Prostate gland (tissue), 2 donors: ENCODE measurements at regions of chr1 and their contacts with region 1.

Region 1: GRCh38 chr1:19918057-19918456 is 5.4 kb downstream of the PLA2G2E start:
- DNase-seq: peak; percentile 80
- H3K4me3 ChIP-seq: no peak overlapping the region
- H3K27ac ChIP-seq: no peak overlapping the region
- H3K4me1 ChIP-seq: no peaks in the 10 kb centered on the region
- H3K27me3 ChIP-seq: no peaks in the 10 kb centered on the region
- CTCF ChIP-seq: peak; percentile 76 to 92 (median 90)
- POLR2A ChIP-seq: no peak

Region 2: DNA sequence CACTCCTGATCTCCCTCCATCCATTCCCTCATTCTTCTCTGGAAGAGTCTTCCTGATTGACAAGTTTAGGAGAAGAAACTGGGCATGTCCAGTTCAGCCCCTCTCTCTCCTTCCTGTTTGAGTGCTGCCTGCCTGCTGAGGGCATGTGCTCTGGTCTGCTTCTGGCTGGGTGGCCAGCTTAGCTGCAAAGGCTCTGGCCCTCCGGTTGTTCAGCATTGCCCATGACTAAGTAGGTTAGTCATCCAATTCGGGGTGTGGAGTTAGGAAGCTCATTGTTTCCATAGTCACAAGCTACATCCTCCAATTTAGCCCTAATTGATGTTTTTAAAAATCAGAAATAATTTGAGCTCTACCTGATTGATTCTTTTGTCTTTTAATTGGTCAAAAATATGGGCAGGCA is 31.0 kb after region 1 on chr1:
- intact Hi-C with region 1: no loop called
- DNase-seq: no peak
- H3K4me3 ChIP-seq: no peak overlapping the region
- H3K27ac ChIP-seq: no peak overlapping the region
- H3K4me1 ChIP-seq: no peaks in the 10 kb centered on the region
- H3K27me3 ChIP-seq: no peaks in the 10 kb centered on the region
- CTCF ChIP-seq: no peak
- POLR2A ChIP-seq: no peak

Region 3: GRCh38 chr1:20093940-20094391 is 175.9 kb after region 1 on chr1:
- intact Hi-C with region 1: loop called (anchors 10 kb)
- DNase-seq: no peak
- H3K4me3 ChIP-seq: no peak overlapping the region
- H3K27ac ChIP-seq: peak overlapping the region in 1 of 2 donors; percentile 40
- H3K4me1 ChIP-seq: no peaks in the 10 kb centered on the region
- H3K27me3 ChIP-seq: no peaks in the 10 kb centered on the region
- CTCF ChIP-seq: no peak
- POLR2A ChIP-seq: no peak

Region 4: GRCh38 chr1:20151906-20152598 is 234.0 kb after region 1 on chr1:
- intact Hi-C with region 1: loop called (anchors 5 kb)
- DNase-seq: peak; percentile 59
- H3K4me3 ChIP-seq: peak overlapping the region; percentile 11 to 29
- H3K27ac ChIP-seq: peak overlapping the region in 1 of 2 donors; percentile 30
- H3K4me1 ChIP-seq: no peaks in the 10 kb centered on the region
- H3K27me3 ChIP-seq: no peaks in the 10 kb centered on the region
- CTCF ChIP-seq: peak; percentile 86 to 96 (median 92)
- POLR2A ChIP-seq: no peak

Region 5: GRCh38 chr1:20194757-20195461 is 276.9 kb after region 1 on chr1:
- intact Hi-C with region 1: loop called (anchors 10 kb)
- DNase-seq: peak; percentile 58
- H3K4me3 ChIP-seq: no peak overlapping the region
- H3K27ac ChIP-seq: peak overlapping the region in 1 of 2 donors; percentile 2
- H3K4me1 ChIP-seq: no peaks in the 10 kb centered on the region
- H3K27me3 ChIP-seq: no peaks in the 10 kb centered on the region
- CTCF ChIP-seq: peak; percentile 34 to 80 (median 79)
- POLR2A ChIP-seq: no peak

Region 6: GRCh38 chr1:20426923-20427322 is 508.9 kb after region 1 on chr1:
- intact Hi-C with region 1: no loop called
- DNase-seq: no peak
- H3K4me3 ChIP-seq: no peak overlapping the region
- H3K27ac ChIP-seq: no peak overlapping the region
- H3K4me1 ChIP-seq: no peaks in the 10 kb centered on the region
- H3K27me3 ChIP-seq: no peaks in the 10 kb centered on the region
- CTCF ChIP-seq: no peak
- POLR2A ChIP-seq: no peak

Region 7: DNA sequence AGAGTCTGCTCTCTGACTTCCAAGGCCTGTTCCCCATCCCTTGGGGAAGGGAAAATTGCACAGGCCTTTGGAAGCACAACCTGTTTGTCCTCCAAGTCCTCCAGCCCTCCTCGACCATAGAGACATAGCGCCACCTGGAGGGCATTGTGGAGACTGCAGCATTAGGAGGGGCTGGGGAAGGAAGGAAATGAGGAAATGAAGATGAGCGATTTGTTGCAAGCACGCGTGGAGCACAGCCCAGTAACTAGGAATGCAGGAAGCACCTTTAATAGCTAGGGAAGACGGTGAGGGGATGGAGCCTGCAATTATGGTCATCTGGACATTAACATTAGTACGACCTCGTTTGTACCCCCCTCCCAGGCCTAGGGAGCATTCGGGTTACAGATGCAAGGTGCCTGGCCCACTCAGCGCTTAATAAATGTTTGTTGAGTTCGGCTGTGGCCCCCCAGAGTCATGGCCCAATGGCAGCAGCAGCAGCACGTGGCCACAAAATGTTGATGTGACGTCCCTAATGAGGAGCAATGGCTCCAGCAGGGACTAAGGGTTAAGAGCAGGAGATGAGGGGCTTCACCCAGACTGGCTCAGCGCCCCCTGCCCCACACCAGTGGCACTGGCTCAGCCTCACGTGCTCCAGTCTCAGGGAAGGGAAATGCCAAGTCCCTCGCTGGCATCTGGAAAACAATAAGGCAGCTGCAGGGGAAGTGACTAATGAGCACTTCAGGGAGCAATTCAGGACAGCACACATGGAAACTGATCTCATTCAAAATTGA is 576.0 kb after region 1 on chr1:
- intact Hi-C with region 1: loop called (anchors 5 kb)
- DNase-seq: peak; percentile 74
- H3K4me3 ChIP-seq: no peak overlapping the region
- H3K27ac ChIP-seq: no peak overlapping the region
- H3K4me1 ChIP-seq: no peaks in the 10 kb centered on the region
- H3K27me3 ChIP-seq: no peaks in the 10 kb centered on the region
- CTCF ChIP-seq: peak; percentile 96 to 99 (median 98)
- POLR2A ChIP-seq: no peak

Region 8: DNA sequence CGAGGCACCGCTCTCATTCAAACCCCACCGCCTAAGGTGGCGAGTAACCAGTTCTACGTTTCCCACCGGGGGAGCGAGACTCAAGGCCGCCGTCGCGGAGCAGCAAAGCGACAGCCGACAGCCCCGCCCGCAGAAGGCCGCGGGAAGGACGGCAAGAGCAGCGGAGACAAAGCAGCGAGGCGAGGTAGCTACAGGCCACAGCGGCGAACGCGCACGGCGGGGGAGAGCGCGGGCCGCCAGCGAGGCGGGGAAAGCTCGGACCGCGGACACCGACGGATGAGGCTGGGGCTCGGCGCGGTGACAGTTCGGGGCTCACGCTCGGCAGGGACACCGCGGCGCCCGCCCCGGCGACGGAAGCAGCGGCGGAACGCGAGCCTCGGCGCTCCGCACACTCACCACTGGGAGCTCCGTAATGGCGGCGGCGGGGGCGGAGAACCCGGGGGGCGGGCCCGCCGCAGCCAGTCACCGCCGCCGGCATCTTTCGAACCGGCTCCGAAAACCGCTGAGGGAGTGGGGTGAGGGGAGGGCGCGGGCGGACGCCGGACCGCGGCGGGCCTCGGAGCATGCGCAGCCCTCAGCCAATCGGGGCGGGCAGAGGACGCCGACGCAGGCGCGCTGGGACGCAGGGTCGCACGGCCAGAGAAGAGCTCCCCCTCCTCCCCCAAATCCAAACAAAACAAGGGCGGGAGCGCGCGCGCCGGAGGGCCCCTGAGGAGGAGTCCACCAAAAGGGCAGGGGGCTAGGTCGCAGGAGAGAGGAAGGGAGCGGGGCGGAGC is 868.4 kb after region 1 on chr1:
- intact Hi-C with region 1: no loop called
- DNase-seq: peak; percentile 93
- H3K4me3 ChIP-seq: peak overlapping the region; percentile 97
- H3K27ac ChIP-seq: peak overlapping the region; percentile 99
- H3K4me1 ChIP-seq: peaks cover 12% of the 10 kb centered on the region
- H3K27me3 ChIP-seq: no peaks in the 10 kb centered on the region
- CTCF ChIP-seq: peak in 3 of 4 experiments; percentile 3 to 19 (median 5)
- POLR2A ChIP-seq: peak; percentile 84